Activated CD4-positive, alpha-beta memory T cell treated with anti-CD3 and anti-CD28 coated beads for 36 hours (primary cell): ENCODE measurements at regions of chr1 and their contacts with region 1.

Region 1: GRCh38 chr1:35726450-35727433 is 8.1 kb upstream of the C1orf216 start:
- DNase-seq: peak; percentile 56
- H3K4me3 Mint-ChIP-seq: no peak overlapping the region
- H3K27ac Mint-ChIP-seq: no peak overlapping the region
- H3K4me1 Mint-ChIP-seq: no peaks in the 10 kb centered on the region
- H3K27me3 Mint-ChIP-seq: no peaks in the 10 kb centered on the region

Region 2: GRCh38 chr1:35564037-35564883 is 162.5 kb before region 1 on chr1:
- CTCF ChIA-PET with region 1: interaction called, 133 read pairs
- POLR2A ChIA-PET with region 1: no interaction called
- intact Hi-C with region 1: loop called (anchors 1 kb)
- DNase-seq: peak; percentile 87
- H3K4me3 Mint-ChIP-seq: no peak overlapping the region
- H3K27ac Mint-ChIP-seq: peak overlapping the region; percentile 44
- H3K4me1 Mint-ChIP-seq: peaks cover 22% of the 10 kb centered on the region
- H3K27me3 Mint-ChIP-seq: no peaks in the 10 kb centered on the region

Region 3: GRCh38 chr1:35577071-35577998 is 149.4 kb before region 1 on chr1:
- CTCF ChIA-PET with region 1: interaction called, 46 read pairs
- POLR2A ChIA-PET with region 1: no interaction called
- intact Hi-C with region 1: no loop called
- DNase-seq: peak; percentile 76
- H3K4me3 Mint-ChIP-seq: peak overlapping the region; percentile 72
- H3K27ac Mint-ChIP-seq: peak overlapping the region; percentile 58
- H3K4me1 Mint-ChIP-seq: peaks cover 22% of the 10 kb centered on the region
- H3K27me3 Mint-ChIP-seq: peaks cover 5% of the 10 kb centered on the region

Region 4: DNA sequence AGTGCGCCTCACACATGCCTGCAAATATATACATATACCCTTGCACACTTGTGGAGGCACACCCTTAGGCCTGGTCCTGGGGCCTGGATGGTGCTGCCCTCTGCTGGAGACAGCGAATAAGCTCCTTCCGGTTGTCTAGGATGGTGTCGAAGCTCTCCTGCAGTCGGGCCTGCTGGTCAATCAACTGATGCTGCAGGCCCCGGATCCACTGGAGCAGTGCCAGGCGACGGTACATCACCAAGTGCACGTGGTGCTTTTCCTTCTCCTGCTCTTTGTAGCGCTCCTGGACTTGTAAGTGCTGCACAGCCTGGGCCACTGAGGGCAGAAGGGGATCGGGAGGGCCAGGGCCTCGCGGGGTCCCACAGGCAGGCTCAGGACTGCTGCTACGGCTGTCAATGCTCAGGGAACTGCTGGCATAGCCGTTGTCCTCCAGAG is 11.2 kb before region 1 on chr1:
- CTCF ChIA-PET with region 1: interaction called, 96 read pairs
- POLR2A ChIA-PET with region 1: no interaction called
- intact Hi-C with region 1: no loop called
- DNase-seq: peak; percentile 86
- H3K4me3 Mint-ChIP-seq: no peak overlapping the region
- H3K27ac Mint-ChIP-seq: no peak overlapping the region
- H3K4me1 Mint-ChIP-seq: peaks cover 32% of the 10 kb centered on the region
- H3K27me3 Mint-ChIP-seq: no peaks in the 10 kb centered on the region

Region 5: GRCh38 chr1:35737120-35737519 is 10.4 kb after region 1 on chr1:
- CTCF ChIA-PET with region 1: interaction called, 36 read pairs
- POLR2A ChIA-PET with region 1: no interaction called
- intact Hi-C with region 1: no loop called
- DNase-seq: no peak
- H3K4me3 Mint-ChIP-seq: no peak overlapping the region
- H3K27ac Mint-ChIP-seq: no peak overlapping the region
- H3K4me1 Mint-ChIP-seq: no peaks in the 10 kb centered on the region
- H3K27me3 Mint-ChIP-seq: no peaks in the 10 kb centered on the region

Region 6: GRCh38 chr1:35747938-35748702 is 21.4 kb after region 1 on chr1:
- CTCF ChIA-PET with region 1: interaction called, 10 read pairs
- POLR2A ChIA-PET with region 1: no interaction called
- intact Hi-C with region 1: no loop called
- DNase-seq: no peak
- H3K4me3 Mint-ChIP-seq: no peak overlapping the region
- H3K27ac Mint-ChIP-seq: no peak overlapping the region
- H3K4me1 Mint-ChIP-seq: no peaks in the 10 kb centered on the region
- H3K27me3 Mint-ChIP-seq: no peaks in the 10 kb centered on the region

Region 7: GRCh38 chr1:35763201-35763600 is 36.5 kb after region 1 on chr1:
- CTCF ChIA-PET with region 1: interaction called, 18 read pairs
- POLR2A ChIA-PET with region 1: no interaction called
- intact Hi-C with region 1: no loop called
- DNase-seq: no peak
- H3K4me3 Mint-ChIP-seq: no peak overlapping the region
- H3K27ac Mint-ChIP-seq: no peak overlapping the region
- H3K4me1 Mint-ChIP-seq: peaks cover 11% of the 10 kb centered on the region
- H3K27me3 Mint-ChIP-seq: no peaks in the 10 kb centered on the region